Sigmoid colon (tissue), 7 donors: ENCODE measurements at regions of chr12 and their contacts with region 1.

Region 1: DNA sequence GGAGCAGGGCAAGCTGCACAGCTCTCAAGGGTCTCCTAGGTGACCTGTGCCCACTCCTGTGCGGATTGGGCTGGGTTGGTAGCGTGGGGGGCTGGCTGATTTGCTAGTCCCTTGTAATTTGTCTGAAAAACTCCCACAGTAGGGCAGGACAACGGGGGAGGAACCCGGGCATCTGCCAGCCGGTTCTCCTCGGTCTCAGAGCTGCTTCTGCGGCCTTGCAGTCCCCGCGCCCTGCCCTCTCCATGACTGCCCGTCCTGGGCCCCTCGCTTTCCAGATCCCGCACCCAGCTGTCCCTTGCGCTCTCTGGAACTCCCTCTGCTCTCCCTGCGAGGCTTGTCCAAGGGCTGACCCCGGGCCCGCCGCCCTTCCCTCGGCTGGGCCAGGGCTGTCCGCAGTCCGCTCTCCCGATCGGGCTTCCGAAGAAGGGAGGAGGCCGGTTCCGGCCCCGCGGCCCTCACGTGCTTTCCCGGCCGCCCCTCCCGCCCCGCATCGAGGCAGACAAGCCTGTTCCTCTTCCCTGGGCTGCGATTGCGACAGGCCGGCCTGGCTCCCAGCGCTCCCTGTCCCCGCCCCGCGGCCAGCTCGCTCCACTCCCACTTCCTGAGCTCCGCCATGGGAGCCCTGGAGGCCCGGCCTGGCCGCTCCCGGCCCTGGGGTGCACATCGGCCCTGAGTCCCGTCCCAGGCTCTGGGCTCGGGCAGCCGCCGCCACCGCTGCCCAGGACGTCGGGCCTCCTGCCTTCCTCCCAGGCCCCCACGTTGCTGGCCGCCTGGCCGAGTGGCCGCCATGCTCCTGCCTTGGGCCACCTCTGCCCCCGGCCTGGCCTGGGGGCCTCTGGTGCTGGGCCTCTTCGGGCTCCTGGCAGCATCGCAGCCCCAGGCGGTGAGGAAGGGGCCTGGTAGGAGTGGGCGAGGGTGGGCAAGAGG is at the start of gene LTBR:
- DNase-seq: peak; percentile 99
- H3K4me3 ChIP-seq: peak within 1 kb of the TSS; percentile 68 to 93 (median 84)
- H3K27ac ChIP-seq: peak within 1 kb of the TSS; percentile 93 to 98 (median 94)
- H3K4me1 ChIP-seq: peaks cover 3 to 82% (median 70%) of the 10 kb centered on the region in 4 donors
- H3K27me3 ChIP-seq: no peaks in the 10 kb centered on the region
- CTCF ChIP-seq: no peak
- EP300 ChIP-seq: peak in 2 of 4 donors; percentile 73 to 77
- POLR2A ChIP-seq: peak; percentile 74 to 82
- total RNA-seq, gene LTBR: 85.2 to 200 (median 125) TPM

Region 2: GRCh38 chr12:6335451-6336078 is 48.3 kb before region 1 on chr12:
- intact Hi-C with region 1: loop called (anchors 2 kb)
- DNase-seq: peak; percentile 92
- H3K4me3 ChIP-seq: peak overlapping the region; percentile 29 to 88 (median 65)
- H3K27ac ChIP-seq: peak overlapping the region; percentile 93 to 98 (median 97)
- H3K4me1 ChIP-seq: peaks cover 0 to 84% (median 72%) of the 10 kb centered on the region in 4 donors
- H3K27me3 ChIP-seq: no peaks in the 10 kb centered on the region
- CTCF ChIP-seq: peak in 3 of 4 experiments; percentile 39 to 58 (median 48)
- EP300 ChIP-seq: no peak
- POLR2A ChIP-seq: no peak

Region 3: DNA sequence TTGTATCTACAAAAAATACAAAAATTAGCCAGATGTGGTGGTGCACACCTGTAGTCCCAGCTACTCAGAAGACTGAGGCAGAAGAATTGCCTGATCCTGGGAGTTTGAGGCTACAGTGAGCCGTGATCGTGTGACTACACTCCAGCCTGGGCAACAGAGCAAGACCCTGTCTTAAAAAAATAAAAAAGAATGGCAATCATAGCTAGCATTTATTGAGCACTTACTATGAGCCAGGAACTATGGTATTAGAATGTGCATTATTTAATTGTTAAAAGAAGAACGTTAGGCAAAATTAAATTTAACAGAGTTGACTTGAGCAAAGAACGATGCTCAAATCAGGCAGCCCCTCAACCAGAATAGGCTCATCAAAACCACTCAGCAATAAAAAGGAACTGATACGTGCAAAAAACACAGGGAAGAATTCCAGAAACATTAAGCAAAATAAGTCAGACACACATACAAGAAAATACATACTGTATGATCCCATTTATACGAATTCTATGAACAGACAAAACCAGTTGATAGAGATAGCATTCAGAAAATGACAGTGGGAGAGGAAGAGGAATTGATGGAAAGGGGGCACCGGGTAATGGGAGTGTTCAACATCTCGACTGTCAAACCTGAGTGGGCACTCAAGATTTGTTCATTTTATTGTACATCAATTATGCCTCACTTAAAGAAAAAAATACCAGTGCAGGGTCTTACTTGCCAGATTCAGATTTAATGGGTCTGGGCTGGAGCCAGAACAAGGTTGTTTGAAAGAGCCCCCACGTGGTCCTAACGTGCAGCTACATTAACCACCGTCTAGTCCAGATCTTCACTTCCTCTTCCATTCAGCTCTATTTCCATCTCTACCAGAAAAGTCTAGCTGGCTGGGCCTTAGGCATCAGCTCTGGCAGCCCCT is 16.5 kb before region 1 on chr12:
- intact Hi-C with region 1: loop called (anchors 2 kb)
- DNase-seq: no peak
- H3K4me3 ChIP-seq: no peak overlapping the region
- H3K27ac ChIP-seq: peak overlapping the region; percentile 25 to 60 (median 32)
- H3K4me1 ChIP-seq: peaks cover 0 to 44% (median 20%) of the 10 kb centered on the region in 4 donors
- H3K27me3 ChIP-seq: no peaks in the 10 kb centered on the region
- CTCF ChIP-seq: peak in 1 of 4 experiments; percentile 7
- EP300 ChIP-seq: no peak
- POLR2A ChIP-seq: no peak